Activated naive CD4-positive, alpha-beta T cell treated with anti-CD3 and anti-CD28 coated beads, Interleukin-2, amount 10 ng/mL, durations not matched to agents 7 days and 5 days (primary cell): ENCODE measurements at regions of chr10 and their contacts with region 1.

Region 1: DNA sequence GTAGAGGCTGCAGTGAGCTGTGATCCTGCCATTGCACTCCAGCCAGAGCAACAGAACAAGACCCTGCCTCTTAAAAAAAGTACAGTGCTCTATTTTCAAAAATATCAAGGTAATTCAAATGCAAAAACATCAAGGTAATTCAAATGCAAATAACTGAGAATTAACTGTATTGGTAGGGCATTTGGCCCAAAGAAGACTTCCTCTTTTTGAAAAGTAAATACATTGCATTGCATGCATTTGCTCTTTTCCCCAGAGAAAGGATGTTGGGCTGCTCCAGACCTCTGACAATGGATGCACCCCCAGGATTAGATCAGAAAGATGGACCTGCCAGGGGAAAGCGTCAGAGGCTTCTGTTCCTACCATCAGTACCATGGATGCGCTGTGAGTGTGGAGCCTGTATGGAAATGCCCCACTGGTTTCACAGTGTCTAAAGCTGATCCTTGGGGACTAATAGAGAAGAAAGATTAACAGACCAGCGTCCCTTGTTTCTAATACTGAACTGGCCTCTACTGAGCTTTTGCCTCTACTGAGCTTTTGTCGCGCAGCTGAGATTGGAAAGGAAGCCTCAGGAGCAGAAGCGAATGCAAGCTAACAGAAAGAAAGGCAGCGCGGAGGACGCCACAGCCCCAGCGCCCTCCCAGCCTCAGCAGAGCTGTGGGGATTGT is 93.5 kb upstream of the LYZL2 start:
- DNase-seq: no peak
- H3K4me3 Mint-ChIP-seq: no peak overlapping the region
- H3K27ac Mint-ChIP-seq: no peak overlapping the region
- H3K4me1 Mint-ChIP-seq: peaks cover 13% of the 10 kb centered on the region
- H3K27me3 Mint-ChIP-seq: peaks cover 10% of the 10 kb centered on the region

Region 2: DNA sequence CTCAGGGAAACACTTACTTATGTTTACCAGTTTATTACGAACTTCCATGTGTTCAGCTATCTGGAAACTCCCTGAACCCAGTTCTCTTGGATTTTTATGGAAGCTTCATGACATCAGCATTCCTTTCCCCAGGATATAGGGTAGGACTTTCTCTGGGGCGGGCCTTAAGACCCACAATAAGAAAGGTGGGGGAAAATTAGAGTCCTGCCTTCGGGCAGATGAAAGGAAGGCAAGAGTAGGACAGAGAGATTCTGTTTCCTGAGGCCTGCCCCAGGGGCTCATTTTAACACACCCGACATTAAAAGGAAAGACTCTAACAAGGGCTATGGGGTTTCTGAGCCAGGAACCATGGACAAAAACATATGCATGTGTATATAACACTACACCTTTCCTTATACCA is 203.4 kb before region 1 on chr10:
- CTCF ChIA-PET with region 1: no interaction called
- DNase-seq: no peak
- H3K4me3 Mint-ChIP-seq: no peak overlapping the region
- H3K27ac Mint-ChIP-seq: no peak overlapping the region
- H3K4me1 Mint-ChIP-seq: peaks cover 15% of the 10 kb centered on the region
- H3K27me3 Mint-ChIP-seq: peaks cover 8% of the 10 kb centered on the region

Region 3: GRCh38 chr10:30639946-30640786 is 82.9 kb before region 1 on chr10:
- CTCF ChIA-PET with region 1: interaction called, 11 read pairs
- DNase-seq: no peak
- H3K4me3 Mint-ChIP-seq: no peak overlapping the region
- H3K27ac Mint-ChIP-seq: no peak overlapping the region
- H3K4me1 Mint-ChIP-seq: no peaks in the 10 kb centered on the region
- H3K27me3 Mint-ChIP-seq: peaks cover 48% of the 10 kb centered on the region

Region 4: GRCh38 chr10:30671026-30671616 is 52.0 kb before region 1 on chr10:
- CTCF ChIA-PET with region 1: interaction called, 20 read pairs
- DNase-seq: no peak
- H3K4me3 Mint-ChIP-seq: peak overlapping the region; percentile 12
- H3K27ac Mint-ChIP-seq: no peak overlapping the region
- H3K4me1 Mint-ChIP-seq: peaks cover 9% of the 10 kb centered on the region
- H3K27me3 Mint-ChIP-seq: peaks cover 34% of the 10 kb centered on the region

Region 5: GRCh38 chr10:30687698-30688219 is 35.3 kb before region 1 on chr10:
- CTCF ChIA-PET with region 1: interaction called, 97 read pairs
- DNase-seq: peak; percentile 87
- H3K4me3 Mint-ChIP-seq: no peak overlapping the region
- H3K27ac Mint-ChIP-seq: no peak overlapping the region
- H3K4me1 Mint-ChIP-seq: peaks cover 24% of the 10 kb centered on the region
- H3K27me3 Mint-ChIP-seq: peaks cover 27% of the 10 kb centered on the region

Region 6: GRCh38 chr10:30709229-30709628 is 13.9 kb before region 1 on chr10:
- CTCF ChIA-PET with region 1: interaction called, 13 read pairs
- DNase-seq: no peak
- H3K4me3 Mint-ChIP-seq: no peak overlapping the region
- H3K27ac Mint-ChIP-seq: no peak overlapping the region
- H3K4me1 Mint-ChIP-seq: peaks cover 34% of the 10 kb centered on the region
- H3K27me3 Mint-ChIP-seq: peaks cover 3% of the 10 kb centered on the region